ENCODE measurements at regions of chr1 and their contacts with region 1.

Region 1: GRCh38 chr1:111030590-111030989 is 66.9 kb upstream of the LRIF1 start:
- DNase-seq: peak; percentile 50
- H3K4me3 ChIP-seq: no peak overlapping the region
- H3K27ac ChIP-seq: no peak overlapping the region
- H3K4me1 ChIP-seq: no peaks in the 10 kb centered on the region
- H3K27me3 ChIP-seq: no peaks in the 10 kb centered on the region
- CTCF ChIP-seq: peak; percentile 70 to 72
- POLR2A ChIP-seq: no peak

Region 2: DNA sequence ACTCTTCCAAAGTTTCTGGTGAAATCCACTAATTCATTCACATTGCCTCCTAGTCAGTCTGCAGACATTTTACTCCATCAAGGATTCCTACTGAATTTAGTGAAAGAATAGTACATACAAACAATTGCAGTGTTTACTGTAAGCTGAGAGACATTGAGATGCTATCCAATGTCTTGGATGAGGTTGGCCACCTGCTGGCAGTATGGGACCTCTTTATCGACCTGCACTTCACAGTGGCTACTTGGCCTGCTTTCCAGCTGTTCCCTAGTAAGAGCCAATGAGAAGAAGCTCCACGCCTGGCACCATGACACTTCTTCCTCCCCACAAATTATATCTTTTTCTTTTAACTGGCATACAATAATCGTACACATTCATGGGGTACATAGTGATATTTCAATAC is 15.4 kb before region 1 on chr1:
- CTCF ChIA-PET with region 1: interaction called, 13 read pairs
- POLR2A ChIA-PET with region 1: no interaction called
- dilution Hi-C with region 1: no loop called
- intact Hi-C with region 1: no loop called
- DNase-seq: no peak
- H3K4me3 ChIP-seq: no peak overlapping the region
- H3K27ac ChIP-seq: no peak overlapping the region
- H3K4me1 ChIP-seq: no peaks in the 10 kb centered on the region
- H3K27me3 ChIP-seq: no peaks in the 10 kb centered on the region
- CTCF ChIP-seq: no peak
- POLR2A ChIP-seq: no peak

Region 3: DNA sequence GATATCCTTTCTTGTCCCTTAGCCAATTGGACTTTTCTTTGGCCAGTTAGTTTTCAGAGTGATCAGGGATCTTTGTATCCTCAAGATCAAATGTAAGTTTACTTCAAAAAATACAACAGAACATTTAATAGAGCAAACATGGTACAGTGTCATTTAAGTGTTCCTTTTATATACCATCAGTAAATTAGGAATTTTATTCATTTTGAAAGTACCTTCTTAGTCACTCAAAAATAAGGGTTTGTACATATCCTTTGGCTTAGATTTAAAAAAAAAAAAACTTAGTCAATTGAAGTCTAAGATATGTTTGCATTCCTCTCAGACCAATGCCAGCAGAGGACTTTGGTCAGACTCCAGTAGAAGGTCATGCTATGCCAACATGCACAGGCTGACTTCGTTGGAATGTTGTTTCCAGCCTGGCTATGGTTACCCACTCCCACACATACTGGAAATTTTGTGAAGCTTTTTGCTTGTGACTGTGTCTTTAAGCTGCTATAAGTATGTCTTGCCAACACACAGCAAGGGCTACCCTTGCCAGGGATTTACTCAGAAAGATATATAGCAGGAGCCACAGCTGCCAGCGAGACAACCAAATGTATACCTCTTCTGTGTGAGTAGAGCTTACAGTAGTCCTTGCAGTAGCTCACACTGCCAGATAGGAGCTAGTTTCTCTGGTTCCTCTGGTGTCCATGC is 14.6 kb after region 1 on chr1:
- CTCF ChIA-PET with region 1: interaction called, 36 read pairs
- POLR2A ChIA-PET with region 1: no interaction called
- dilution Hi-C with region 1: no loop called
- intact Hi-C with region 1: no loop called
- DNase-seq: no peak
- H3K4me3 ChIP-seq: no peak overlapping the region
- H3K27ac ChIP-seq: no peak overlapping the region
- H3K4me1 ChIP-seq: no peaks in the 10 kb centered on the region
- H3K27me3 ChIP-seq: no peaks in the 10 kb centered on the region
- CTCF ChIP-seq: no peak
- POLR2A ChIP-seq: no peak